HepG2 (cell line): ENCODE measurements at regions of chr14 and their contacts with region 1.

Region 1: DNA sequence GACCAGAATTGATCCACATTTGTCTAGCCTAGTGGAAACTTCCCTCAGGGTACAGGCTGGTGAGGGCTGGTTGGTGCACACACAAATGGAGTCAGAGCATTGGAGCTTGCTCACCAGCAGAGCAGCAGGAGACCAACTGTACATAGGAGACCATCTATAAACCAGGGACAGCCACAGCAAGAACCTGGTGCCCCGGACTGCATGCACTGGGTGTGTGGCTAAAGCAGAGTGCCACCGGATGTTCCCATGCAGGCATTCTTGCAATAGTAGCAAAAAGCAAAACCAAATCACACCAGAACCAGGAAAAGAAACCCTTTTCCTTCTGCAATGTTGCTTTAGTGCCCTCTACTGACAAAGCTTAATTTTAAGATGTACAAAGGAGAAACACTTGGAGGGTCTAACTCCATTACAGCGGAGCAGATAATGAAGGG is 136.4 kb downstream of the MDGA2 start:
- DNase-seq: peak; percentile 10
- ATAC-seq: peak; percentile 72
- H3K4me3 ChIP-seq: no peak overlapping the region
- H3K27ac ChIP-seq: no peak overlapping the region
- H3K4me1 ChIP-seq: no peaks in the 10 kb centered on the region
- H3K27me3 ChIP-seq: no peaks in the 10 kb centered on the region
- CTCF ChIP-seq: peak; percentile 54
- EP300 ChIP-seq: no peak
- POLR2A ChIP-seq: no peak
- RAD21 ChIP-seq: no peak

Region 2: GRCh38 chr14:46490238-46490685 is 1048.8 kb before region 1 on chr14:
- CTCF ChIA-PET with region 1: no interaction called
- POLR2A ChIA-PET with region 1: no interaction called
- in situ Hi-C with region 1: no loop called
- intact Hi-C with region 1: loop called (anchors 5 kb)
- DNase-seq: peak; percentile 2
- ATAC-seq: no peak
- H3K4me3 ChIP-seq: no peak overlapping the region
- H3K27ac ChIP-seq: no peak overlapping the region
- H3K4me1 ChIP-seq: no peaks in the 10 kb centered on the region
- H3K27me3 ChIP-seq: no peaks in the 10 kb centered on the region
- CTCF ChIP-seq: no peak
- EP300 ChIP-seq: no peak
- POLR2A ChIP-seq: no peak
- RAD21 ChIP-seq: no peak

Region 3: GRCh38 chr14:47442209-47442608 is 96.8 kb before region 1 on chr14:
- CTCF ChIA-PET with region 1: no interaction called
- POLR2A ChIA-PET with region 1: no interaction called
- in situ Hi-C with region 1: no loop called
- intact Hi-C with region 1: loop called (anchors 2 kb)
- DNase-seq: peak; percentile 35
- ATAC-seq: peak; percentile 95
- H3K4me3 ChIP-seq: no peak overlapping the region
- H3K27ac ChIP-seq: no peak overlapping the region
- H3K4me1 ChIP-seq: no peaks in the 10 kb centered on the region
- H3K27me3 ChIP-seq: no peaks in the 10 kb centered on the region
- CTCF ChIP-seq: peak; percentile 43
- EP300 ChIP-seq: no peak
- POLR2A ChIP-seq: no peak
- RAD21 ChIP-seq: no peak

Region 4: GRCh38 chr14:47507861-47508260 is 31.2 kb before region 1 on chr14:
- CTCF ChIA-PET with region 1: no interaction called
- POLR2A ChIA-PET with region 1: no interaction called
- in situ Hi-C with region 1: no loop called
- intact Hi-C with region 1: no loop called
- DNase-seq: no peak
- ATAC-seq: no peak
- H3K4me3 ChIP-seq: no peak overlapping the region
- H3K27ac ChIP-seq: no peak overlapping the region
- H3K4me1 ChIP-seq: no peaks in the 10 kb centered on the region
- H3K27me3 ChIP-seq: no peaks in the 10 kb centered on the region
- CTCF ChIP-seq: no peak
- EP300 ChIP-seq: no peak
- POLR2A ChIP-seq: no peak
- RAD21 ChIP-seq: no peak

Region 5: GRCh38 chr14:47567273-47567672 is 28.2 kb after region 1 on chr14:
- CTCF ChIA-PET with region 1: no interaction called
- POLR2A ChIA-PET with region 1: no interaction called
- in situ Hi-C with region 1: no loop called
- intact Hi-C with region 1: no loop called
- DNase-seq: no peak
- ATAC-seq: no peak
- H3K4me3 ChIP-seq: no peak overlapping the region
- H3K27ac ChIP-seq: no peak overlapping the region
- H3K4me1 ChIP-seq: no peaks in the 10 kb centered on the region
- H3K27me3 ChIP-seq: no peaks in the 10 kb centered on the region
- CTCF ChIP-seq: no peak
- EP300 ChIP-seq: no peak
- POLR2A ChIP-seq: no peak
- RAD21 ChIP-seq: no peak